ENCODE measurements at regions of chr9 and their contacts with region 1.

Region 1: DNA sequence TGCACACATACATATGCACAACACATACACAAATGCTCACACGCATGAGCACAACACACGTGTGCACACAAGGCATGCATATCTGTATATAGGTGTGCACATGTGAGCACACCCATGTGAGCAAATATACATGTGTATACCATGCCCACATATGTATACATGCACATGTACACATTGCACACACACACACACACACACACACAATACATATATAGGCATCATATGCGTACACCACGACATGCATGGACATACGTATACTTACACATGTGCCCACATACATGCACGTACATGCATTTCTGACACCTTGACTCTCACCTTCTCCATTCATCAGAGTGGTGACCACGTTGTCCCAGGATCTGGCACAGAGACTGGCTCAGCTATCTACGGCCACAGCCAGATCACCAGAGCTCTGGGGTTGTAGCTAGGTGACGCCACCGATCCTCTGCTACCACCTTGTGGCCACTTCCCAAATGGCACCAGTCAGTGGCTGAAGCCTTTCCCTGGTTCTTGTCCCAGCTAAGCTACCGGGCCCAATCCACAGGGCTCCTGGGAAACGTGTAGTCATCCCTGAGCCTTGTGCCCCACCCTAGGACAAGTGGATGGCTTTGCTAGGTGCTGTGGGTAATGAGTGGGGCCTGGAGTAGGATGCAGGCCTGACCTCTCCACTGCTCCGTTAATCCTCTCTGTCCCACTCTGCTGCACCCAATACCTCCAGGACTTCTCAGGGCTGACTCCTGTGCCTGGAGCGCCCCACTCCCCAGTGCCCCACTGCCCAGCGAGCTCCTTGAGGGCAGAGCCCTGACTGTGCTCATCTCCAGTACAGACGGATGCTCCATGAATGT is 194.4 kb downstream of the RGS3 start:
- DNase-seq: peak; percentile 83
- ATAC-seq: peak; percentile 98
- H3K4me3 ChIP-seq: no peak overlapping the region
- H3K27ac ChIP-seq: no peak overlapping the region
- H3K4me1 ChIP-seq: peaks cover 5% of the 10 kb centered on the region
- H3K27me3 ChIP-seq: no peaks in the 10 kb centered on the region
- CTCF ChIP-seq: peak; percentile 97
- POLR2A ChIP-seq: 0 out of 2 replicates have a peak, but pooled peaks have one; percentile 49
- RAD21 ChIP-seq: peak; percentile 99

Region 2: GRCh38 chr9:112921549-112921948 is 736.4 kb before region 1 on chr9:
- CTCF ChIA-PET with region 1: no interaction called
- POLR2A ChIA-PET with region 1: no interaction called
- dilution Hi-C with region 1: no loop called
- in situ Hi-C with region 1: no loop called
- intact Hi-C with region 1: loop called (anchors 5 kb)
- DNase-seq: peak; percentile 63
- ATAC-seq: peak; percentile 89
- H3K4me3 ChIP-seq: no peak overlapping the region
- H3K27ac ChIP-seq: no peak overlapping the region
- H3K4me1 ChIP-seq: no peaks in the 10 kb centered on the region
- H3K27me3 ChIP-seq: peaks cover 37% of the 10 kb centered on the region
- CTCF ChIP-seq: peak; percentile 58
- POLR2A ChIP-seq: no peak
- RAD21 ChIP-seq: peak; percentile 59

Region 3: GRCh38 chr9:113309204-113309813 is 348.6 kb before region 1 on chr9:
- CTCF ChIA-PET with region 1: interaction called, 4 read pairs
- POLR2A ChIA-PET with region 1: no interaction called
- dilution Hi-C with region 1: no loop called
- in situ Hi-C with region 1: loop called (anchors 10 kb)
- intact Hi-C with region 1: loop called (anchors 2 kb)
- DNase-seq: peak; percentile 59
- ATAC-seq: peak; percentile 88
- H3K4me3 ChIP-seq: no peak overlapping the region
- H3K27ac ChIP-seq: no peak overlapping the region
- H3K4me1 ChIP-seq: no peaks in the 10 kb centered on the region
- H3K27me3 ChIP-seq: peaks cover 10% of the 10 kb centered on the region; the same call in 1 of the 2 replicates
- CTCF ChIP-seq: peak; percentile 87
- POLR2A ChIP-seq: no peak
- RAD21 ChIP-seq: peak; percentile 83

Region 4: GRCh38 chr9:113446323-113446740 is 211.6 kb before region 1 on chr9:
- CTCF ChIA-PET with region 1: interaction called, 14 read pairs
- POLR2A ChIA-PET with region 1: no interaction called
- dilution Hi-C with region 1: no loop called
- in situ Hi-C with region 1: loop called (anchors 5 kb)
- intact Hi-C with region 1: loop called (anchors 2 kb)
- DNase-seq: peak; percentile 55
- ATAC-seq: peak; percentile 73
- H3K4me3 ChIP-seq: no peak overlapping the region
- H3K27ac ChIP-seq: no peak overlapping the region
- H3K4me1 ChIP-seq: no peaks in the 10 kb centered on the region
- H3K27me3 ChIP-seq: no peaks in the 10 kb centered on the region
- CTCF ChIP-seq: peak; percentile 73
- POLR2A ChIP-seq: no peak
- RAD21 ChIP-seq: peak; percentile 92

Region 5: DNA sequence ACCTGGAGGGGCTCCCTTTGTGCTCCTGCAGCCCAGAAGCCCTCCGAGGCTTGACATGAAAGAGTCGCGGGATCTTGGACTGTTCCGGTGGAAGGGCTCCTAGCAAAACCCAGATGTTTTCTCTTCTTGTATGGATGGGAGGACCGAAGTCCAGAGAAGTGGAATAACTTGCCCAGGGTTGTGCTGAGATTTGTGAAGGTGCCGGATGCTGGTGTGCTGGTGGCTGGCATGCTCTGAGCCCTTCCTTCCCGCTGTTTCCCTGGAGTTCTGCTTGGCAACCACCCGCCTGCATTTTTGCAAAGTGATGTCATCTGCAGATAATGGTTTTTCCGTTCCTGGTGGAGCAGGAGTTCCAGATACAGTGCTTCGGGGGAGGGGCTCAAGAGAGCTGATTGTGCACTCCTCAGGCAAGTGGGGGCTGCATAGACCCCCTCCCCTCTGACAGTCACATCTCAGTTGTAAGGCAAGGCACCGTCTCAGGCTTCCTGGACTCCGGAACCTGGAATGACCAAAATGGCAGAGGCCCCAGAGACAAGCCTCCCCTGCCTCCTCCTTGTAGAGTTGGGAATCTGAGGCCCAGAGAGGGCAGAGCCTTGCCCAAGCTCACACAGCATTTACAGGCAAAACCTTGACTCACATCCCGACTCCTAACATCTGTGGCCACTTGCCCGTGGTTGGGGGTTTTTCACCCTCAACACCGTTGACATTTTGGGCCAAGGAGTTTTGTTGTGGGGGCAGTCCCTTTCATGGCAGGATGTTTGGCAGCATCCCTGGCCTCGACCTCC is 37.4 kb before region 1 on chr9:
- CTCF ChIA-PET with region 1: interaction called, 7 read pairs
- POLR2A ChIA-PET with region 1: no interaction called
- dilution Hi-C with region 1: no loop called
- in situ Hi-C with region 1: no loop called
- intact Hi-C with region 1: loop called (anchors 2 kb)
- DNase-seq: peak; percentile 93
- ATAC-seq: peak; percentile 65
- H3K4me3 ChIP-seq: no peak overlapping the region
- H3K27ac ChIP-seq: peak overlapping the region; percentile 96
- H3K4me1 ChIP-seq: peaks cover 38% of the 10 kb centered on the region
- H3K27me3 ChIP-seq: no peaks in the 10 kb centered on the region
- CTCF ChIP-seq: no peak
- POLR2A ChIP-seq: 0 out of 2 replicates have a peak, but pooled peaks have one; percentile 2
- RAD21 ChIP-seq: no peak; the same call in 1 of the 2 replicates

Measured in IMR-90 (cell line).